Breast epithelium (tissue), 4 donors: ENCODE measurements at regions of chr3 and their contacts with region 1.

Region 1: DNA sequence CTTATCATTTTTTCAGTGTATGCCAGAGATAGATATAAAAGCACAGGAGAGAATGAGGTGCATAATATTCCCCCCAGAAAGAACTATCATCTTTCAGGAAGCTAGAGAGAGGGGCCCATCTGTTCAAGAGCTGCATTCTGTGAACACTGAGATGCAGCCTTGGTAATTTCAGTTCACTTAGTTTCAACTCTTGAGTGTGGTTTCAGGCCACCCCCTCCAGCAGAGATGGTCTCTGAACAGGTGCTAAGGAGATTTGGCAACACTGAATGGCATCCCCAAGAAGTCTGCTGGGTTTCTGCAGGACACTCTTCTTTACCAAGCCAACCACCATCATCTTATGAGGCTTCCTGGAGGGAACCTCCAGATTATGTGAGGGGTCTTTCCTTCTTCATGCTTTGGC is 30.4 kb upstream of the LIMD1 start:
- DNase-seq: no peak
- H3K4me3 ChIP-seq: no peak overlapping the region
- H3K27ac ChIP-seq: no peak overlapping the region
- H3K4me1 ChIP-seq: peaks cover 8 to 11% of the 10 kb centered on the region in 2 donors
- H3K27me3 ChIP-seq: no peaks in the 10 kb centered on the region
- CTCF ChIP-seq: no peak
- POLR2A ChIP-seq: no peak

Region 2: DNA sequence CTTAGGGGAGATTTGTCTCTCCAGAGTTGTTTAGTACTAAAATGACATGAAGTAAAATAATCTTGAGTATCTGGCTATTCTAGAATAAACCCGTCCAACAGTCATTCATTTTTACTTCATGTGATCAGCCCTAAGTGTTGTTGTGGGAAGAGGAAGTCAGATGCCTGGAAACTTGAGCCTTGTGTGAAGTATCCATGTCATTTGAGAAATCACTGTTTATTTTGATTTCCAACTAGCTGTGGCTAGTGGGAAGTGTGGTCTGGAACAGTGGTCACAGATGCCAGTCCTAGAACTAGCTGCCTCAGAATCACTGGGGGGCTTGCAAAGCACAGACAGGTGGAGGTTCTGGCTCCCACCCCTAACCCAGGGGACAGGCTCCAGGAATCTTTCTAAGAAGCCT is 47.3 kb before region 1 on chr3:
- intact Hi-C with region 1: loop called (anchors 1 kb)
- DNase-seq: no peak
- H3K4me3 ChIP-seq: no peak overlapping the region
- H3K27ac ChIP-seq: no peak overlapping the region
- H3K4me1 ChIP-seq: no peaks in the 10 kb centered on the region
- H3K27me3 ChIP-seq: no peaks in the 10 kb centered on the region
- CTCF ChIP-seq: no peak
- POLR2A ChIP-seq: no peak

Region 3: DNA sequence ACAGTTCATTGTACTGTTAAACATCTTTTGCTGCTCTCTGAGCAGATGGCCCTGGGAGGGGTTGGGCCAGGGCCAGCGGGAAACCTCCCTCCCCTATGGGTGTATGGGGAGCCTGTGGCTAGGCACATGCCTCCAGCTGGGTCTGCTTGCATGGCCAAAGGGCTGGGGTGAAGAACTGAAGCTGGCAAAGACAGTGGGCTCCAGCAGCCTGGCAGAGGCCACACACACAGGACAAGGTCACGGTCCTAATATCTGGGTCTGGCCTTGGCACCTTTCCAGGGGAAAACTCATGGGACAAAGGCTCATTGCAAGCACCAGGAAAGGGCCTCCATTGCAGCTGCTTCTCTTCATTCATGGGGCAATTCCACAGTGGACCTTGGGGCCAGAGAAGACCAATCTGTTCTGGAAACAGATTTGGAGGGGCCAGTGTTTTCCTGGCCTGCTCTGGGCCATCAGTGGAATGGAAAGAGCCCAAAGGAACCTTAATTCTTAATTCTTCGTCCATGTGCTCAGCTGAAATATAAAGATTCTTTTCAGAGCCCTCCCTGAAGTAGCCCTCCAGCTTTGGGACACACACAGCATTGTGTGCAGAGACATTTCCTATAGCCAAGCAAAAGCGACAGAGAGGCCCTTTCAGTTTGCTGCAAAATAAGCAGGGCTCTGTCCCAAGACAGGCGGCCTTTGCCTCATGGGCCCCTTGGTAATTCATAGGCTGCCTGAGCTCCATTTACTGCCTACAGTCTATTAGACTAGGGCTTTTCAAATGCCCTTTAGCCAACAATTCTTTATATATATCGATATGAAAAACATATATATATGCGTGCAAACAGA is 19.1 kb after region 1 on chr3:
- intact Hi-C with region 1: no loop called
- DNase-seq: no peak
- H3K4me3 ChIP-seq: no peak overlapping the region
- H3K27ac ChIP-seq: peak overlapping the region in 1 of 2 donors; percentile 26
- H3K4me1 ChIP-seq: peaks cover 0 to 11% of the 10 kb centered on the region in 2 donors
- H3K27me3 ChIP-seq: no peaks in the 10 kb centered on the region
- CTCF ChIP-seq: no peak
- POLR2A ChIP-seq: no peak